ENCODE measurements at regions of chr1 and their contacts with region 1.

Region 1: GRCh38 chr1:58783993-58784757 is at the start of gene JUN:
- DNase-seq: peak; percentile 98
- H3K4me3 Mint-ChIP-seq: peak within 1 kb of the TSS; percentile 96
- H3K27ac Mint-ChIP-seq: peak within 1 kb of the TSS; percentile 96
- H3K4me1 Mint-ChIP-seq: peaks cover 34% of the 10 kb centered on the region
- H3K27me3 Mint-ChIP-seq: peaks cover 4% of the 10 kb centered on the region
- total RNA-seq, gene JUN: 68.5 and 71.6 TPM in 2 replicates

Region 2: DNA sequence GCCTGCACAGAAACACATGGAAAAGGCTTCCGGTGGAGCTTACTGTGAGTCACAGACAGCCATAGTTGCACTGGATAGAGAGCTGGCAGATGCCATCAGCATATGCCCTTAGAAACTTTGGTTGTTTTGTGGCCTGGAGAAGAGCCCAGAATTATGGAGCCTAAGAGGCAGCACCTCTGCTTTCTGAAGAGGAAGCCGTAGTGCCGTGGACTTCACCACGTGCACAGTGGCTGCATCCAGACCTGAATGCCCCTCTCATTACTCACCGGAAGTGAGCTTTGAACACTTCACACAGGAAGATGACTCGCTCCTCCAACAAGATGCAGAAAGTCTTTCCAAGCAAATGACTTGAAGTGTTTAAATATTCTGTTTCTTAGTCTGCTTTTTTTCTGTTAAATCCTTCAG is 28.7 kb before region 1 on chr1:
- intact Hi-C with region 1: loop called (anchors 1 kb)
- DNase-seq: peak; percentile 48
- H3K4me3 Mint-ChIP-seq: peak overlapping the region; percentile 59
- H3K27ac Mint-ChIP-seq: peak overlapping the region; percentile 88
- H3K4me1 Mint-ChIP-seq: peaks cover 61% of the 10 kb centered on the region
- H3K27me3 Mint-ChIP-seq: no peaks in the 10 kb centered on the region

Region 3: GRCh38 chr1:58903514-58904298 is 119.5 kb after region 1 on chr1:
- intact Hi-C with region 1: loop called (anchors 1 kb)
- DNase-seq: peak; percentile 81
- H3K4me3 Mint-ChIP-seq: peak overlapping the region; percentile 76
- H3K27ac Mint-ChIP-seq: peak overlapping the region; percentile 87
- H3K4me1 Mint-ChIP-seq: peaks cover 32% of the 10 kb centered on the region
- H3K27me3 Mint-ChIP-seq: no peaks in the 10 kb centered on the region

Region 4: DNA sequence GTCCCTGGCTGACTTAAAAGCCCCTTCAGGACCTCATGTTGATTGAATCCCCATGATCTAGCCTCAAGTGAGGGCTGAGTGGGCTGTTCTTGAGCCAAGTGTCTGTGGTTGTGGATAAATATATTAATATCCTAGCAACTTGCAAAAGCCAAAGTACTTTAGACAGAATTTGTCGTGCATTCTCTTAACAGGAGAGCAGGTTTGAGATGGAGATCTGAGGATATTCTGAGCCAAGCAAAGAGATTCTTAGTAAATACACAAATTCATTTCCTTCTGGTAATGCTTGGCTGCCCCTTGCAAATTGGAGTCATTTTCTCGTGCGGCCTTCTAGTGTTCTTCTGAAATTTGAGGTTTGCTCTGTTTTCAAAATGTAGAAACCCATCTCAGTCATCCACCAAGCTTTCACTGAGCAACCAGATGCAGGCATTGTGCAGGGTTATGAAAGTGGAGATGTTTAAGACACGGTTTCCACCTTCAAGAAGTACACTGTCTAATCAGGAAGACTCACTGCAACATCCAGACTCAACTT is 241.8 kb after region 1 on chr1:
- intact Hi-C with region 1: loop called (anchors 1 kb)
- DNase-seq: no peak
- H3K4me3 Mint-ChIP-seq: no peak overlapping the region
- H3K27ac Mint-ChIP-seq: no peak overlapping the region
- H3K4me1 Mint-ChIP-seq: peaks cover 17% of the 10 kb centered on the region
- H3K27me3 Mint-ChIP-seq: no peaks in the 10 kb centered on the region

Region 5: GRCh38 chr1:59107516-59107915 is 323.3 kb after region 1 on chr1:
- intact Hi-C with region 1: no loop called
- DNase-seq: no peak
- H3K4me3 Mint-ChIP-seq: no peak overlapping the region
- H3K27ac Mint-ChIP-seq: no peak overlapping the region
- H3K4me1 Mint-ChIP-seq: no peaks in the 10 kb centered on the region
- H3K27me3 Mint-ChIP-seq: peaks cover 4% of the 10 kb centered on the region

Region 6: GRCh38 chr1:59332983-59333382 is 548.8 kb after region 1 on chr1:
- intact Hi-C with region 1: loop called (anchors 1 kb)
- DNase-seq: peak; percentile 47
- H3K4me3 Mint-ChIP-seq: peak overlapping the region; percentile 15
- H3K27ac Mint-ChIP-seq: peak overlapping the region; percentile 78
- H3K4me1 Mint-ChIP-seq: peaks cover 44% of the 10 kb centered on the region
- H3K27me3 Mint-ChIP-seq: no peaks in the 10 kb centered on the region

Measured in activated T-helper 1 cell treated with anti-CD3 and anti-CD28 coated beads, Interleukin-12 subunit alpha, Interleukin-12 subunit beta, Interleukin-2, Interleukin-4 antibody, amounts not matched to agents 30 ng/mL and 10 ng/mL and 1 ng/mL, durations not matched to agents 14 hours and 24 hours and 36 hours (primary cell).